ENCODE measurements at regions of chr13 and their contacts with region 1.

Region 1: GRCh38 chr13:40666045-40666904 is at the start of gene FOXO1:
- DNase-seq: peak; percentile 81 to 95 (median 90)
- ATAC-seq: peak; percentile 76
- H3K4me3 ChIP-seq: peak within 1 kb of the TSS; percentile 98
- H3K4me3 Mint-ChIP-seq: peak within 1 kb of the TSS; percentile 96
- H3K27ac ChIP-seq: peak within 1 kb of the TSS; percentile 56 to 91
- H3K27ac Mint-ChIP-seq: peak within 1 kb of the TSS; percentile 95
- H3K4me1 ChIP-seq: peaks cover 23% of the 10 kb centered on the region
- H3K4me1 Mint-ChIP-seq: peaks cover 37% of the 10 kb centered on the region
- H3K27me3 ChIP-seq: no peaks in the 10 kb centered on the region
- H3K27me3 Mint-ChIP-seq: no peaks in the 10 kb centered on the region
- CTCF ChIP-seq: no peak
- total RNA-seq, gene FOXO1: 93.1 to 101 TPM

Region 2: DNA sequence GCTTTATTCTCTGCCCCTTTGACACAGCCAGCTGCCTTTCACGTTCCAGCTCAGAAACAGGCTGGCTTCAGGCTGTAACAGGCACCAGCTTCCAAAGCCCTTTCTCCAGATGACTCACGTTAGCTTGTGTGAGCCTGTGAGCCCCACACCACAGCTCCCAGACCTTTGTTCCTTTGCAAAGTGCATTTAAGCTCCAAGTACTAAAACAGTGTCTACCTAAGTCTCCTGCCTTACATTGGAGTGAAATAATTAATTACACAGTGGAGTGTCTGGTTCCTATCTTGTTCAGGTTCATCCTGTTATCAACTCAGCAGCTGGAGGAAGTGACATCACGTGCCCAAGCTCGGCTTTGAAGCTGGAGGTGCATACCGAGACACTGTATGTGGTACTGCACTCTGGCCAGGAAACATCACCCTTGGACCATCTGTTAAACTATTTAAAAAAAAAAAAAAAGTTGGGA is 475.6 kb before region 1 on chr13:
- CTCF ChIA-PET with region 1: no interaction called
- POLR2A ChIA-PET with region 1: interaction called, 31 read pairs
- intact Hi-C with region 1: loop called (anchors 1 to 5 kb)
- DNase-seq: peak; percentile 44 to 92 (median 74)
- ATAC-seq: peak; percentile 45
- H3K4me3 ChIP-seq: no peak overlapping the region
- H3K4me3 Mint-ChIP-seq: peak overlapping the region; percentile 80
- H3K27ac ChIP-seq: peak overlapping the region; percentile 60 to 71
- H3K27ac Mint-ChIP-seq: peak overlapping the region; percentile 99
- H3K4me1 ChIP-seq: peaks cover 65% of the 10 kb centered on the region
- H3K4me1 Mint-ChIP-seq: peaks cover 90% of the 10 kb centered on the region
- H3K27me3 ChIP-seq: no peaks in the 10 kb centered on the region
- H3K27me3 Mint-ChIP-seq: no peaks in the 10 kb centered on the region
- CTCF ChIP-seq: no peak

Region 3: DNA sequence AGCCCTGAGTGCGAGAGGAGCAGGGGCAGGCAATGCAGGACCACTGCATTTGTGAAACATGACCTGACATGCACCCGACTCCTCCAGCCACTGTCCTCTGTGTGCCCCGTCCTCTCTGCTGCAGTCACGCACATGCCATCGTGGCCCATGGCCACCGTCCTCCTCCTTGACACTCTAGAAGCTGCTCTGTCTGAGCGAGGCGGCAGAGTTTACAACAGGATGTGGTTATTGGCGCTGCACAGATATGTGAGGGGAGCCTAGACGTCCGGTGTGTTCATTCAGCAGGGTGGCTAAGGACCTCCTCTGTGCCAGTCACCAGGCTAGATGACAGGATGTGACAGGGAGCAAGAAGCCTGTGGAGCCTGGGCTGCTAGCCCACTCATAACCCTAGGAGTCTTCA is 277.7 kb before region 1 on chr13:
- CTCF ChIA-PET with region 1: interaction called, 3 read pairs
- POLR2A ChIA-PET with region 1: interaction called, 12 read pairs
- intact Hi-C with region 1: loop called in 1 of 2 experiments (anchors 5 kb)
- DNase-seq: peak; percentile 66 to 96 (median 78)
- ATAC-seq: peak; percentile 89
- H3K4me3 ChIP-seq: peak overlapping the region; percentile 57
- H3K4me3 Mint-ChIP-seq: peak overlapping the region; percentile 82
- H3K27ac ChIP-seq: peak overlapping the region; percentile 77 to 96
- H3K27ac Mint-ChIP-seq: peak overlapping the region; percentile 95
- H3K4me1 ChIP-seq: peaks cover 35% of the 10 kb centered on the region
- H3K4me1 Mint-ChIP-seq: peaks cover 54% of the 10 kb centered on the region
- H3K27me3 ChIP-seq: no peaks in the 10 kb centered on the region
- H3K27me3 Mint-ChIP-seq: no peaks in the 10 kb centered on the region
- CTCF ChIP-seq: no peak

Region 4: GRCh38 chr13:40494513-40494912 is 171.8 kb before region 1 on chr13:
- CTCF ChIA-PET with region 1: interaction called, 3 read pairs
- POLR2A ChIA-PET with region 1: interaction called, 23 read pairs
- intact Hi-C with region 1: loop called in 1 of 2 experiments (anchors 5 kb)
- DNase-seq: peak in 4 of 14 experiments; percentile 48 to 68 (median 64)
- ATAC-seq: peak; percentile 55
- H3K4me3 ChIP-seq: peak overlapping the region; percentile 28
- H3K4me3 Mint-ChIP-seq: peak overlapping the region; percentile 86
- H3K27ac ChIP-seq: peak overlapping the region; percentile 50 to 55
- H3K27ac Mint-ChIP-seq: peak overlapping the region; percentile 94
- H3K4me1 ChIP-seq: peaks cover 67% of the 10 kb centered on the region
- H3K4me1 Mint-ChIP-seq: peaks cover 84% of the 10 kb centered on the region
- H3K27me3 ChIP-seq: no peaks in the 10 kb centered on the region
- H3K27me3 Mint-ChIP-seq: no peaks in the 10 kb centered on the region
- CTCF ChIP-seq: no peak

Region 5: DNA sequence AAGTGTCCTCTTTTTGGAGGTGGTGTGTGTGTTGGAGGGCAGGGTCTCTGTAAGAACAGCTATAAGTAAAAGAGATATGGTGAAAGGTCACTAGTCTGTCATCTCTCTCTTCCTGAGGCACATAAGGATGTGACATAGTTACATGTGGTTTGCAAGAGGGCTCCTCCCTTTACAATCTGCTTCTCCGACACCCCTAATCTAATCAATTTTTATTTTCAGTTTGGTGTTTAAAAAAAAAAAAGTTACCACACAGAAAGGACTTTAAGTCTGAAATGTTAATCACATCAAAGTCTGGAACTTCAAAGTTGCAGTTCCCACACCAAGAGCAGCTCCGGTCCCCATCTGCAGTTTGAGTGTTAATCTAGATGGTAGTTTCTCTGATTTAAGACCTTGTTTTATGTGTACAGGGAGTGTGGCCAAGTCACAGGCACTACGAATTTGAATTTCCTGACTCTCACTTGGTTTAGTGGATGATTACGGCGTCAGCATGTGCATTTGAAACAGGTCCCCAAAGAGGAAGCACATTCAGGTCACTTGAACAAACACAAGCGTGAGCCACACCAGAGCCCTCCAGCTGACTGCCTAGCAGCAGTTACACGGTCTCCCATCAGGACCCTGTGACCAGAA is 53.0 kb before region 1 on chr13:
- CTCF ChIA-PET with region 1: interaction called, 3 read pairs
- POLR2A ChIA-PET with region 1: interaction called, 10 read pairs
- intact Hi-C with region 1: loop called (anchors 2 to 5 kb)
- DNase-seq: peak; percentile 27 to 89 (median 42)
- ATAC-seq: peak; percentile 81
- H3K4me3 ChIP-seq: peak overlapping the region; percentile 42
- H3K4me3 Mint-ChIP-seq: peak overlapping the region; percentile 73
- H3K27ac ChIP-seq: peak overlapping the region; percentile 70 to 85
- H3K27ac Mint-ChIP-seq: peak overlapping the region; percentile 87
- H3K4me1 ChIP-seq: peaks cover 73% of the 10 kb centered on the region
- H3K4me1 Mint-ChIP-seq: peaks cover 98% of the 10 kb centered on the region
- H3K27me3 ChIP-seq: no peaks in the 10 kb centered on the region
- H3K27me3 Mint-ChIP-seq: no peaks in the 10 kb centered on the region
- CTCF ChIP-seq: no peak

Region 6: GRCh38 chr13:40682449-40683240 is 16.4 kb after region 1 on chr13:
- CTCF ChIA-PET with region 1: interaction called, 15 read pairs
- POLR2A ChIA-PET with region 1: interaction called, 9 read pairs
- intact Hi-C with region 1: no loop called
- DNase-seq: peak in 3 of 14 experiments; percentile 39 to 57 (median 48)
- ATAC-seq: peak; percentile 52
- H3K4me3 ChIP-seq: no peak overlapping the region
- H3K4me3 Mint-ChIP-seq: no peak overlapping the region
- H3K27ac ChIP-seq: no peak overlapping the region
- H3K27ac Mint-ChIP-seq: no peak overlapping the region
- H3K4me1 ChIP-seq: no peaks in the 10 kb centered on the region
- H3K4me1 Mint-ChIP-seq: peaks cover 13% of the 10 kb centered on the region
- H3K27me3 ChIP-seq: no peaks in the 10 kb centered on the region
- H3K27me3 Mint-ChIP-seq: no peaks in the 10 kb centered on the region
- CTCF ChIP-seq: peak; percentile 89

Measured in CD4-positive, alpha-beta T cell (primary cell).